ENCODE measurements at regions of chr9 and their contacts with region 1.

Region 1: DNA sequence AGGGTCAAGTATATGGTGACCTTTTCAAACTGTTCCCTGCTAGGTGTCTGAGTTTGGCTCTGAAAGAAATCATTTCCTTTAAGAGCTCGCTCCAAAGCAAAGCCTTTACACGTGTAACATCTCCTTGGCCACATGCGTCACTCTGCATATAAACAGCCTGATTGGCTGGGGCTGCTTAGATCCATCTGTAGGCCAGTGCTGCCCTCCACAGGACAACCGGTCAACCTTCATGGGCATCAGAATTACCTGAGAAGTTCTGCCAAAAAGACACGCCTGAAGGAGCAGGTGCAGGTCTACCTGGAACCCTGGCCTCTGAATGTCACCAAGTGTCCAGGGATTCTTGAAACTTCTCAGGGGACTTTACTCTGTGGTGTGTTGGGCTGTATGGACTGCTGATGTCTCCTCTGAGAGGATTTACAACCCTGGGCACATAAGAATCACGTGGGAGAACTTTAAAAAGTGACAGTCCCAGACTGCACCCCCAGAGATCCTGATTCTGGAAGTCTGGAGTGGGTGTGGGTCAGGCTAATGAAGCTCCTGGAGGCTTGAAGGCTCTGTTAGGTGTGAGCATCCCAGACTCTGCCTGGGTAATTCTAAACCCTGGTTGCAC is 497.6 kb downstream of the GADD45G start:
- DNase-seq: peak; percentile 91
- H3K4me3 Mint-ChIP-seq: no peak overlapping the region
- H3K27ac Mint-ChIP-seq: no peak overlapping the region
- H3K4me1 Mint-ChIP-seq: peaks cover 3% of the 10 kb centered on the region
- H3K27me3 Mint-ChIP-seq: peaks cover 2% of the 10 kb centered on the region

Region 2: DNA sequence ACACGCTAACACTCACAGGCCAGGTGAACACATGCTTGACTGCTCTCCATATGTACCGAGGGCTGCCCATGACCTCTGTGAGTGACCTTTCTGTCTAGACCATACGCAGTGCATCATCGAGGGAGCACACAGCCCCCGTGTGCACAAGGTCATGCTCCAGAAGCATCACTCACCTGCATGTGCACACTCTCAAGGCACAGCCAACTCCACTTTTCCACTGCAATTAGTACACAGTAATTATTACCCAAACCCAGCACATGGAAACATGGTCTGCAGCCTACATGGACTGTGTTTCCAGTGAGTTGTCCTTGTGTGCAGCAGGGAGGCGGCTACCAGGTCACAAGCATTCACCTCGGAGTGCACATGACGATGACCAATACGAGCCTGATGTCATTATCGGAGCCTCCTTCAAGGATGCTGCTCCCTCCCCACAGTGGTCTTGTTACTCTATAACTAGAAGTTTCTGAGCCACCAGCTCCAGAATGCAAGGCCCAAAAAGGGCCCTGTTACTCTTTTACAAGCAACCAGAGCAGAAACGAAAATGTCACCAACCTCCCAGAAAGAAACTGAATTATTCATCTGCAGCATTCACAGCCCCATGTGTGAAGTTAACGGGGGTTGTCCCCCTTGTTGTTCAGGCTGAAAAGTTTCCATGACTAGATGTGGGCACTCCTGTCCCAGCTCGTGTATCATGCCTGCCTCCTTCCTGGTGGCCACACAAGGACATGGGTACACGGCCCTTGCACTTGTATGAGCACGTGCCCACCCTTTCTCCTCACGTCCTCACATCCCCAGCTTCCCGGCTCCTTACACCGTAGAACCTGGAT is 635.7 kb before region 1 on chr9:
- CTCF ChIA-PET with region 1: no interaction called
- intact Hi-C with region 1: no loop called
- DNase-seq: peak; percentile 86
- H3K4me3 Mint-ChIP-seq: peak overlapping the region; percentile 38
- H3K27ac Mint-ChIP-seq: peak overlapping the region; percentile 97
- H3K4me1 Mint-ChIP-seq: peaks cover 96% of the 10 kb centered on the region
- H3K27me3 Mint-ChIP-seq: no peaks in the 10 kb centered on the region

Region 3: DNA sequence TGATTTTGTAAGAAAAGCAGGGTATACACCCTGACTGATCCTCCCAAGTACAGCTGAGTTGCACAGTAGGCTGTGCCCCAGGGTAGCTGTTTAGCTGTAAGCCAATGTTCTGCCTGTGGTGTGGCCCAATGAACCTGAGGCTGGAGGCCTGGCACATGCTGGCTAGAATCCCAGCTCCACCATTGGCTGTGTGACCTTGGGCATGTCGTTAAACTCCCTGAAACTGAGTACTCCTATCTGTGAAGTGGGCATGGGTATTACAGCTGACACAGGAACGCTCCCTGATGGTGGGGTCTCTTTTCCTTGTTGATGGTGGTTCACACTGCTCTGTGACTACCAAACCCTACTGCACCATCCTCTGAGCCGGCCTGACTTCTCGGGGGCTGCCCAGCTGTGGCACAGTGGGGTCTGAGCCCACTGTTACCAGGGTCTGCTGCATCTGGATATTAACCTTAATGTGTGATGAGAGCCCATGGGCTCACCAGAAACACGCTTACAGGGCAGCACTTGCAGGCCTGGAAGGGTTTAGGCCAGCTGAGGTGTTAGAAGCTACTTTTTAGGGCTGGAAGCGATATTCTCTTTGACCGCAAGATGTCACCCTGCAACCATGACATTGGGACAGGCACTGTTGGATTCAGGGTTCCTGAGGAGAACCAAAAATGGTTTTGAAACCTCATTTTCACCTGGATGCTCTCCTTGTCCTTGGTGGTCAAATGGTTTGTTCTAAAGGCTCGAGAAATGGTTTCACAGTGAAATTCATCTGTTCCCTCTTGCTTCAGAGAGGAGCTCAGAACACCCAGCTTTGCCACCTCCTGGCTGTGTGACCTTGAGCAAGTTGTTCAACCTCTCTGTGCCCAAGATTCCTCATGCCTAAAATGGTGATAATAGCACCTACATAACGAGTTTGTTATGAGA is 504.4 kb before region 1 on chr9:
- CTCF ChIA-PET with region 1: interaction called, 110 read pairs
- intact Hi-C with region 1: loop called (anchors 1 kb)
- DNase-seq: peak; percentile 74
- H3K4me3 Mint-ChIP-seq: no peak overlapping the region
- H3K27ac Mint-ChIP-seq: no peak overlapping the region
- H3K4me1 Mint-ChIP-seq: no peaks in the 10 kb centered on the region
- H3K27me3 Mint-ChIP-seq: no peaks in the 10 kb centered on the region

Region 4: DNA sequence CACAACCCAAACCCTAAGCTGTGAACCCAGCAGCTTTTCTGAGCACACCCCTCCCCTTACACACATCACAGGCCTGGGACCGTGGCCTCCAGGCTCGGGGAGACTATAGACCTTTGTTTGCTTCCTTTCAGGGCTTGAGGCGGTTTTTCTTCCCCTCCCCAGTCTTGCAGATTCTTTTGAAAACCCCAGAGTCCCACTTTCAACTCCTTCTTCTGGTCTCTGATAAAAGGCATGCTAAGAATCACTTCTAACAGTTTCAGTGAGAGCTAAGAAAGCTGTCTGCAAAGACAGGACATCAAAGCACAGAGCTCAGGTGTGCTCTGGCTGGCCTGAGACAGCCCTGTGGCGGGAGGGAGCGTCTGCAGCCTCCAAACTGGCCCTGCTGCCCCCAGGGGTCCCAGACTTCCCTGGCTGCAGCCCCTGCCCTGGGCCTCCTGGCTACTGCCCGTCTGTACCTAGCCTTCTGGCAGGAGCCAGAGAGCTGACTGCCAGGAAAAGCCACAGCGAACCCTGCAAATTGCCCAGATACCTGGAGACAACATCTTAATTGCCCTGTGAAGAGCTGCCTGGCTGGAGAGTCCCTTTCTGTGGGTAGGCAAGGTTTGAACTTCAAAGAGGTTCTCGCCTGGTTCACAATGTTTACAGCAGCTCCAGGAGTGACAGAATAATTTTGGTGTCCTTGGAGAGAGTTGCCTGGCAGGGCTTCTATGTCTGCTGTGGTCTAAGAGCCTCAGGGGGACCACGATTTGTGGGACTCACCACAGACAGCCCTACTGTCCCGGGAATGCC is 358.6 kb before region 1 on chr9:
- CTCF ChIA-PET with region 1: interaction called, 7 read pairs
- intact Hi-C with region 1: loop called (anchors 5 kb)
- DNase-seq: peak; percentile 69
- H3K4me3 Mint-ChIP-seq: no peak overlapping the region
- H3K27ac Mint-ChIP-seq: peak overlapping the region; percentile 85
- H3K4me1 Mint-ChIP-seq: peaks cover 70% of the 10 kb centered on the region
- H3K27me3 Mint-ChIP-seq: no peaks in the 10 kb centered on the region

Region 5: GRCh38 chr9:89878687-89879086 is 223.7 kb before region 1 on chr9:
- CTCF ChIA-PET with region 1: no interaction called
- intact Hi-C with region 1: no loop called
- DNase-seq: no peak
- H3K4me3 Mint-ChIP-seq: no peak overlapping the region
- H3K27ac Mint-ChIP-seq: no peak overlapping the region
- H3K4me1 Mint-ChIP-seq: no peaks in the 10 kb centered on the region
- H3K27me3 Mint-ChIP-seq: no peaks in the 10 kb centered on the region

Region 6: GRCh38 chr9:89919169-89919681 is 183.2 kb before region 1 on chr9:
- CTCF ChIA-PET with region 1: interaction called, 7 read pairs
- intact Hi-C with region 1: loop called (anchors 1 kb)
- DNase-seq: peak; percentile 73
- H3K4me3 Mint-ChIP-seq: no peak overlapping the region
- H3K27ac Mint-ChIP-seq: no peak overlapping the region
- H3K4me1 Mint-ChIP-seq: peaks cover 14% of the 10 kb centered on the region
- H3K27me3 Mint-ChIP-seq: peaks cover 2% of the 10 kb centered on the region

Region 7: DNA sequence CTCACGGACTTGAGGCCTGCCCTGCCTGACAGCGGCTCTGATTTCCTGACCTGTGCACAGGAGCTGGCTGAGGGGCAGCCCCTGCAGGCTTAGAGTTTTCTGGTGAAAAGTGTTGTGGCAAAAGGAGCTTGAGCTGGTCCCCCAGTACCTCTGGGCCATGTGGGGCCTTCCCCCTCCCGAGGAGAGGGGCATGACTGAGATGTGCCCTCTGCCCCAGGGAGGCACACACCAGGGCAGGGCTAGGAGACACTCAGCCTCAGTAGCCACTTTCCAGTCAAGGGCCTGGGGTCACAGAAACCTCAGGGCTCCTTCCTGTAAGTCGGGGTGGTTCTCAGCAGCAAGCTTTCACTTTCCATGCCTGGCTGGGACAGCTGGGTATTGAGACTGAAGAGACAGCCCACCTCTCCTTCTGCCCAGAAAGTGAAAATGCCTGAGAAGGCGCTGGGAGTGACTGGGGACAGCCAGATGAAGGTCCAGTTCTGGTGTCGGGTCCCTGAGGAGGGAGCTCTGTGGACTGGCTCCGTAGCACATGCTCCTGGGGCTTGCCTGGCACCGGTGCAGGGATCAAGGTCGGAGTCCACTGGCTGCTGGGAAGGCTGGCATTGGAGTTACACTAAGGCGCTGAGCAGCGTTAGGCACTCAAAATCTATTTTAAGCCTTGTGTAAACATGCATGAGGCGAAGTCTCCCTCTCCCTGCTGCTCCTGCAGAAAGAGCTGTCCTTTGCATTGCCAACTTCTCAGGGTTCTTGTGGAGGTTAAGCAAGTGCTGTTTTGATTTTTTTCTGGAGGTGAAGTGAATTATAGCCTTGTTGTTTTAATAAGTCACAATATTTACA is 102.6 kb before region 1 on chr9:
- CTCF ChIA-PET with region 1: interaction called, 3 read pairs
- intact Hi-C with region 1: loop called (anchors 2 kb)
- DNase-seq: peak; percentile 86
- H3K4me3 Mint-ChIP-seq: peak overlapping the region; percentile 47
- H3K27ac Mint-ChIP-seq: peak overlapping the region; percentile 72
- H3K4me1 Mint-ChIP-seq: peaks cover 26% of the 10 kb centered on the region
- H3K27me3 Mint-ChIP-seq: no peaks in the 10 kb centered on the region

Region 8: GRCh38 chr9:90053027-90053426 is 49.4 kb before region 1 on chr9:
- CTCF ChIA-PET with region 1: interaction called, 3 read pairs
- intact Hi-C with region 1: loop called (anchors 2 kb)
- DNase-seq: peak; percentile 50
- H3K4me3 Mint-ChIP-seq: no peak overlapping the region
- H3K27ac Mint-ChIP-seq: no peak overlapping the region
- H3K4me1 Mint-ChIP-seq: no peaks in the 10 kb centered on the region
- H3K27me3 Mint-ChIP-seq: peaks cover 10% of the 10 kb centered on the region

Region 9: GRCh38 chr9:90349907-90350306 is 247.5 kb after region 1 on chr9:
- CTCF ChIA-PET with region 1: no interaction called
- intact Hi-C with region 1: no loop called
- DNase-seq: no peak
- H3K4me3 Mint-ChIP-seq: no peak overlapping the region
- H3K27ac Mint-ChIP-seq: no peak overlapping the region
- H3K4me1 Mint-ChIP-seq: no peaks in the 10 kb centered on the region
- H3K27me3 Mint-ChIP-seq: peaks cover 46% of the 10 kb centered on the region

Measured in activated naive CD4-positive, alpha-beta T cell treated with anti-CD3 and anti-CD28 coated beads for 36 hours (primary cell).